ENCODE measurements at regions of chr7 and their contacts with region 1.

Region 1: GRCh38 chr7:155344600-155345433 is 47.1 kb downstream of the INSIG1 start:
- DNase-seq: peak; percentile 70 to 97 (median 74)
- ATAC-seq: peak; percentile 99
- H3K4me3 ChIP-seq: peak overlapping the region in 1 of 2 donors; percentile 31
- H3K27ac ChIP-seq: no peak overlapping the region
- H3K4me1 ChIP-seq: peaks cover 4 to 12% of the 10 kb centered on the region in 2 donors
- H3K27me3 ChIP-seq: peaks cover 0 to 40% of the 10 kb centered on the region in 2 donors
- CTCF ChIP-seq: peak; percentile 93 to 95

Region 2: DNA sequence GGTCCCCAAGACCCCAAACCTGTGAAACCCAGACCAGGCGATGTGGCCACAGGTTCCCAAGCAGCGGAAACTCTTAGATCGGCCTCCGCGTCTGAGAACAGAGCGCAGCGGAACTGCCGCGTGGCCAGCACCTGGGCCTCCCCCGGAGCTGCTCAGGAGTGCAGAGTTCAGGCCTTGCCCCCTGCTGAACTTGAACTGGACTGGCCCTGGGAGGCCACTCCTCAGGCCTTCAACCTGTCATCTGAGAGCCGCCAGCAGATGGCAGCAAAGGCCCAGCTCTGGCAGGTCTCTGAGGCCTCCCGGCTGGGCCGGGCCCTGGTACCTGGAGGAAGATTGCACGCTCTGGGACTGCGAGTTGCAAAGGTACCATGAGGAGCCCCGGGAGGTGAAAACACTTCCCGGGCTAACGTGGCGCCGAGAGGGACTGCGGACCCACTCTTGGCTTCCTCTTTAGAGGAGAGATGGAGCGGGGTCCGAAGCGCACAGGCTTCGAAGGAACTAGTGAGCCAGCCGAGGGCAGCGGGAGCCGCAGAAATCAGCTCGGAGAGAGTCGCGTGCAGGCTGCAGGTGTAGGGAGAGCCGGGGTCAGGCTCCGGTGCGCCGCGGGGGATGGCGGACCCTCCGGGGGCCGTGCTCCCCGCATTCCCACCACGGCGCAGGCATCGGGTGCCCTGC is 431.0 kb before region 1 on chr7:
- intact Hi-C with region 1: loop called in 1 of 2 experiments (anchors 10 kb)
- DNase-seq: peak; percentile 73 to 97 (median 84)
- ATAC-seq: peak; percentile 100
- H3K4me3 ChIP-seq: peak overlapping the region in 1 of 2 donors; percentile 17
- H3K27ac ChIP-seq: no peak overlapping the region
- H3K4me1 ChIP-seq: peaks cover 0 to 11% of the 10 kb centered on the region in 2 donors
- H3K27me3 ChIP-seq: peaks cover 10 to 26% of the 10 kb centered on the region in 2 donors
- CTCF ChIP-seq: peak; percentile 88 to 95

Region 3: DNA sequence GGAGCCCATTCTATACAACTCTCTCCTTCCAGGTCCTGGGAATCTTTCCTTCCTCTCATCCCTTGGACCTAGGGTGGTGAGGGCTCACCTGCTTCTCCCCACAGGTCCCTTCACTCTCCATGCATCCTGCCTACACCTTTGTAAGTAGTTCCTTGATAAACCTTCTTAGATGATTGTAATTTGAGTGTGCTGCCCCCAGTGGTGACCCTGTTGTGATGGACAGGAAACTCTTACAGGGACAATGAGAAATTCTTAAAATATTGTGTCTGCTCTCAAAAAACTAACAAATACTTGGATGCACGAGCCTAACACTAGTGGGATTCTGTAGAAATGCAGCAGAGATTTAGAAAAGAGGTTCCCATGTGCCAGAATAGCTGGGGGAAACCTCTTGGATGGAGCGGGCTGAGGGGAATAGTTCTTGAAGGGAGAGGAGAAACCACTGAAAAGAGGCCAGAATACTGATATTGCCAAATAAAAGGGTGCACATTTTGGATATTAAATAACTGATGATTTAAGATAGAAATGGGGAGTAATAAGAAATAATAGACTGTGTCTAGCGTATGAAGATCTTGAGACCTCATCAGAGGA is 335.2 kb before region 1 on chr7:
- intact Hi-C with region 1: loop called in 1 of 2 experiments (anchors 10 kb)
- DNase-seq: no peak
- ATAC-seq: no peak
- H3K4me3 ChIP-seq: no peak overlapping the region
- H3K27ac ChIP-seq: no peak overlapping the region
- H3K4me1 ChIP-seq: peaks cover 0 to 3% of the 10 kb centered on the region in 2 donors
- H3K27me3 ChIP-seq: no peaks in the 10 kb centered on the region
- CTCF ChIP-seq: peak; percentile 15 to 22

Region 4: DNA sequence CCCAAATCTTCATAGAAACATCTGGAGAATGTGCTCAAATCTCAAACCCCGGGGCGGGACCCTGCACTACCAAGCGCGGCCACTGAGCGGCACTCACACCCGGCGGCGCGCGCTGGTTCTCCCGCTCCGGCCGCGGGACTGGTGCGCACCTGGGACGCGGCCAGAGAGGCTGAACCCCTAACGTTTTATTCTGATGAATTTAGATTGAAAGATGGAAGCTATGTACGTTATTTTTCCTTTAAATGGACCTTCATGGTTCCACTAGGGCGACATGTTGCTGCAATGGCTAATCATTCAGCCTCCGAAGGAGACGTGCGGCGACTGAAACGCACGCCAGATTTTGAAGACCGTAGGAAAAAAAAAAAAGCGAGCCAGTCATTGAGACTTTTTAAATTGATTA is 154.1 kb before region 1 on chr7:
- intact Hi-C with region 1: loop called in 1 of 2 experiments (anchors 5 kb)
- DNase-seq: peak in 3 of 4 donors; percentile 28 to 95 (median 53)
- ATAC-seq: peak; percentile 95
- H3K4me3 ChIP-seq: no peak overlapping the region
- H3K27ac ChIP-seq: no peak overlapping the region
- H3K4me1 ChIP-seq: peaks cover 0 to 5% of the 10 kb centered on the region in 2 donors
- H3K27me3 ChIP-seq: peaks cover 0 to 16% of the 10 kb centered on the region in 2 donors
- CTCF ChIP-seq: peak; percentile 82 to 85

Region 5: GRCh38 chr7:155860840-155861479 is 516.1 kb after region 1 on chr7:
- intact Hi-C with region 1: no loop called
- DNase-seq: peak; percentile 59 to 90 (median 79)
- ATAC-seq: peak; percentile 84
- H3K4me3 ChIP-seq: no peak overlapping the region
- H3K27ac ChIP-seq: no peak overlapping the region
- H3K4me1 ChIP-seq: peaks cover 3 to 4% of the 10 kb centered on the region in 2 donors
- H3K27me3 ChIP-seq: peaks cover 0 to 4% of the 10 kb centered on the region in 2 donors
- CTCF ChIP-seq: no peak